CD4-positive, alpha-beta memory T cell (primary cell): ENCODE measurements at regions of chr2 and their contacts with region 1.

Region 1: GRCh38 chr2:101697124-101698013 is at the start of gene MAP4K4:
- DNase-seq: peak; percentile 65 to 85 (median 69)
- H3K4me3 ChIP-seq: peak within 1 kb of the TSS; percentile 66 to 86
- H3K4me3 Mint-ChIP-seq: peak within 1 kb of the TSS; percentile 92 to 96 (median 94)
- H3K27ac ChIP-seq: peak within 1 kb of the TSS; percentile 66
- H3K27ac Mint-ChIP-seq: peak within 1 kb of the TSS; percentile 89 to 98 (median 95)
- H3K4me1 ChIP-seq: peaks cover 44% of the 10 kb centered on the region
- H3K4me1 Mint-ChIP-seq: peaks cover 14 to 30% (median 20%) of the 10 kb centered on the region in 4 donors
- H3K27me3 ChIP-seq: no peaks in the 10 kb centered on the region
- H3K27me3 Mint-ChIP-seq: no peaks in the 10 kb centered on the region
- total RNA-seq, gene MAP4K4: 105 to 114 TPM

Region 2: GRCh38 chr2:101473911-101474701 is 223.3 kb before region 1 on chr2:
- CTCF ChIA-PET with region 1: interaction called, 4 read pairs
- POLR2A ChIA-PET with region 1: interaction called, 15 read pairs
- intact Hi-C with region 1: loop called (anchors 1 kb)
- DNase-seq: peak in 4 of 5 donors; percentile 23 to 39 (median 36)
- H3K4me3 ChIP-seq: peak overlapping the region; percentile 26 to 63
- H3K4me3 Mint-ChIP-seq: peak overlapping the region; percentile 82 to 94 (median 89)
- H3K27ac ChIP-seq: no peak overlapping the region
- H3K27ac Mint-ChIP-seq: peak overlapping the region in 4 of 7 donors; percentile 35 to 84 (median 62)
- H3K4me1 ChIP-seq: peaks cover 17% of the 10 kb centered on the region
- H3K4me1 Mint-ChIP-seq: peaks cover 5 to 12% (median 7%) of the 10 kb centered on the region in 4 donors
- H3K27me3 ChIP-seq: no peaks in the 10 kb centered on the region
- H3K27me3 Mint-ChIP-seq: no peaks in the 10 kb centered on the region

Region 3: DNA sequence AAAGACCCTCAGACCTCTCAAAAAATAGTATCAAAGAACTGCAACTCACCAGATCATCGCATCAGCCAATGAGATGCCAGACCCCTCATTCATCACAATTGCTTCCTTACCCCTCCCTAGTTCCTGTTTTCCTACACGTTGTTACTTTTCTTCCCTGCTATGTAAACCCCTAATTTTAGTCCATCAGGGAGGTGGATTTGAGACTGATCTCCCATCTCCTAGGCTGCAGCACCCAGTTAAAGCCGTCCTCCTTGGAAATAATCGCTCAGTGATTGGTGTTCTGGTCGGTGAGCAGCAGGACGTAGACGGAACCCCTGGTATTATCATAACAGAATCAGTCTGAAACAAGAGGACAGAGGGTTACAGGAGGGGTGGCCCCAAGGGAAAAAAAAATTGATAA is 43.9 kb before region 1 on chr2:
- CTCF ChIA-PET with region 1: no interaction called
- POLR2A ChIA-PET with region 1: interaction called, 4 read pairs
- intact Hi-C with region 1: loop called (anchors 5 kb)
- DNase-seq: no peak
- H3K4me3 ChIP-seq: no peak overlapping the region
- H3K4me3 Mint-ChIP-seq: no peak overlapping the region
- H3K27ac ChIP-seq: no peak overlapping the region
- H3K27ac Mint-ChIP-seq: peak overlapping the region in 4 of 7 donors; percentile 1 to 59 (median 28)
- H3K4me1 ChIP-seq: peaks cover 23% of the 10 kb centered on the region
- H3K4me1 Mint-ChIP-seq: peaks cover 14 to 32% (median 20%) of the 10 kb centered on the region in 4 donors
- H3K27me3 ChIP-seq: no peaks in the 10 kb centered on the region
- H3K27me3 Mint-ChIP-seq: no peaks in the 10 kb centered on the region

Region 4: DNA sequence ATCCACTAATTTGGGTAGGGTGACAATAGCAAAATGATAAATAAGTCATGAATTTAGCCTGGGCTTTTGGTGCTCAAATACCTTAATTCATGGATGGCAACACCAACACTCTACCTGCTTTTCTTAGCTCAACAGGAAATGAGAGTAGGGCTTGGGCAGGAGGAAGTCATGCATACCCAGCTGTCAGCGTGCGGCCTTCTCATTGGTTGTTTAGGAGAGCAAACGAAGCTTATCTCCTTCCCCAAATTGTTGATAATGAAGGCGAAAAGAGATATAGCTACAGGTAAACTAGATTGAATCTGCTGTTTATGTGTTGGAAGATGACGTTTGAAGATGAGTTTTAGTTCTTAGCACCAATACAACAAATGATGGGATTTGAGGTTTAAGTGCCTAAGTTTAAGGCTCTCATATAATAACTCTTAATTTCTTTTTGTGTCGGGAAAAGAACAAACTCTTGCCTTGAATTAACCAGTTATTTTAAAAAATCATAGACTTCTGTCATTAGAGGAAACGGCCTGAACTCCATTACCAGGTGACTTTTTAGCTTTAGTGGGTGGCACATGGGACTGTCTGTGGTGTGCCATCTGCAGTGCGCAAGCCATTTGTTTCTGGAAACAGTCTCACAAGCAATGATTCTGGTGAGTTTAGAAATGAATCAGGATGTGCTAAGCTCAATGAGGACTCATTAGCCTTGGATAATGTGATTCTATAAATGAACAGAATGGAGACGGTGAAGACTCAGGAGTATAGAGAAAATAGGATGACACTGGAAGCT is 19.9 kb after region 1 on chr2:
- CTCF ChIA-PET with region 1: interaction called, 18 read pairs
- POLR2A ChIA-PET with region 1: interaction called, 171 read pairs
- intact Hi-C with region 1: loop called (anchors 2 kb)
- DNase-seq: peak; percentile 61 to 79 (median 68)
- H3K4me3 ChIP-seq: peak overlapping the region in 1 of 2 donors; percentile 17
- H3K4me3 Mint-ChIP-seq: peak overlapping the region; percentile 50 to 79 (median 72)
- H3K27ac ChIP-seq: peak overlapping the region; percentile 67
- H3K27ac Mint-ChIP-seq: peak overlapping the region; percentile 82 to 96 (median 93)
- H3K4me1 ChIP-seq: peaks cover 98% of the 10 kb centered on the region
- H3K4me1 Mint-ChIP-seq: peaks cover 60 to 87% (median 71%) of the 10 kb centered on the region in 4 donors
- H3K27me3 ChIP-seq: no peaks in the 10 kb centered on the region
- H3K27me3 Mint-ChIP-seq: no peaks in the 10 kb centered on the region

Region 5: GRCh38 chr2:101823347-101823791 is 126.0 kb after region 1 on chr2:
- CTCF ChIA-PET with region 1: interaction called, 17 read pairs
- POLR2A ChIA-PET with region 1: interaction called, 19 read pairs
- intact Hi-C with region 1: loop called (anchors 1 kb)
- DNase-seq: peak; percentile 62 to 82 (median 67)
- H3K4me3 ChIP-seq: no peak overlapping the region
- H3K4me3 Mint-ChIP-seq: peak overlapping the region in 7 of 8 donors; percentile 13 to 69 (median 48)
- H3K27ac ChIP-seq: no peak overlapping the region
- H3K27ac Mint-ChIP-seq: peak overlapping the region; percentile 66 to 90 (median 83)
- H3K4me1 ChIP-seq: peaks cover 67% of the 10 kb centered on the region
- H3K4me1 Mint-ChIP-seq: peaks cover 45 to 87% (median 66%) of the 10 kb centered on the region in 4 donors
- H3K27me3 ChIP-seq: no peaks in the 10 kb centered on the region
- H3K27me3 Mint-ChIP-seq: no peaks in the 10 kb centered on the region

Region 6: GRCh38 chr2:102291318-102292251 is 594.2 kb after region 1 on chr2:
- CTCF ChIA-PET with region 1: no interaction called
- POLR2A ChIA-PET with region 1: no interaction called
- intact Hi-C with region 1: no loop called
- DNase-seq: no peak
- H3K4me3 ChIP-seq: no peak overlapping the region
- H3K4me3 Mint-ChIP-seq: no peak overlapping the region
- H3K27ac ChIP-seq: no peak overlapping the region
- H3K27ac Mint-ChIP-seq: no peak overlapping the region
- H3K4me1 ChIP-seq: no peaks in the 10 kb centered on the region
- H3K4me1 Mint-ChIP-seq: peaks cover 0 to 5% (median 2%) of the 10 kb centered on the region in 4 donors
- H3K27me3 ChIP-seq: no peaks in the 10 kb centered on the region
- H3K27me3 Mint-ChIP-seq: peaks cover 1 to 2% of the 10 kb centered on the region in 2 donors